ENCODE measurements at regions of chr19 and their contacts with region 1.

Region 1: DNA sequence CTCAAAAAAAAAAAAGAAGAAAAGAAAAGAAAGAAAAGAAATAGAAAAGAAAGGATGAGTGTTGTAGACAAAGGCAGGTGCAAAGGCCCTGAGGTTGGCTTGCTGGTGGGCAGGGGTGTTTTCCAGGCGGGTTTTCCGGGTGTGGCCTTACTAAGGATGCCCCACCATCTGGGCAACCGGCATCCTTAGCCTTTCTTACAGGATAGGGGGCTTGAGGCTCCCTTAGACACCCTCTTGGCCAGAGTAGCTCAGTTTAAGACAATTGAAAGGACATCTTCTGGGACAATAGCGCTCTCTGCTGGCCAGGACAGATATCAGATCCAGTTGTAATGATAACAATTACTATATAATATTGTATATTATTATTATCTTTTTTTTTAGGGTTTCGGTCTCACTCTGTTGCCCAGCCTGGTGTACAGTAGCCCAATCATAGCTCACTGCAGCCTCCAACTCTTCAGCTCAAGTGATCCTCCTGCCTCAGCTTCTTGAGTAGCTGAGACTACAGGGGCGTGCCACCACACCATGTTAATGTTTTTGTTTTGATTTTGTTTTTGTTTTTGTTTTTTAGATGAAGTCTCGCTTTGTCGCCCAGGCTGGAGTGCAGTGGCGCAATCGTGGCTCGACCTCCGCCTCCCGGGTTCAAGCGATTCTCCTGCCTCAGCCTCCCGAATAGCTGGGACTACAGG is 1.4 kb upstream of the QTRT1 start:
- DNase-seq: peak; percentile 85
- H3K4me3 ChIP-seq: no peak overlapping the region
- H3K27ac ChIP-seq: no peak overlapping the region
- H3K4me1 ChIP-seq: peaks cover 14% of the 10 kb centered on the region
- CTCF ChIP-seq: peak; percentile 84

Region 2: GRCh38 chr19:10510301-10510802 is 189.4 kb before region 1 on chr19:
- CTCF ChIA-PET with region 1: interaction called, 3 read pairs
- POLR2A ChIA-PET with region 1: no interaction called
- intact Hi-C with region 1: loop called (anchors 2 kb)
- DNase-seq: peak; percentile 44
- H3K4me3 ChIP-seq: no peak overlapping the region
- H3K27ac ChIP-seq: no peak overlapping the region
- H3K4me1 ChIP-seq: peaks cover 3% of the 10 kb centered on the region
- CTCF ChIP-seq: peak; percentile 78

Region 3: DNA sequence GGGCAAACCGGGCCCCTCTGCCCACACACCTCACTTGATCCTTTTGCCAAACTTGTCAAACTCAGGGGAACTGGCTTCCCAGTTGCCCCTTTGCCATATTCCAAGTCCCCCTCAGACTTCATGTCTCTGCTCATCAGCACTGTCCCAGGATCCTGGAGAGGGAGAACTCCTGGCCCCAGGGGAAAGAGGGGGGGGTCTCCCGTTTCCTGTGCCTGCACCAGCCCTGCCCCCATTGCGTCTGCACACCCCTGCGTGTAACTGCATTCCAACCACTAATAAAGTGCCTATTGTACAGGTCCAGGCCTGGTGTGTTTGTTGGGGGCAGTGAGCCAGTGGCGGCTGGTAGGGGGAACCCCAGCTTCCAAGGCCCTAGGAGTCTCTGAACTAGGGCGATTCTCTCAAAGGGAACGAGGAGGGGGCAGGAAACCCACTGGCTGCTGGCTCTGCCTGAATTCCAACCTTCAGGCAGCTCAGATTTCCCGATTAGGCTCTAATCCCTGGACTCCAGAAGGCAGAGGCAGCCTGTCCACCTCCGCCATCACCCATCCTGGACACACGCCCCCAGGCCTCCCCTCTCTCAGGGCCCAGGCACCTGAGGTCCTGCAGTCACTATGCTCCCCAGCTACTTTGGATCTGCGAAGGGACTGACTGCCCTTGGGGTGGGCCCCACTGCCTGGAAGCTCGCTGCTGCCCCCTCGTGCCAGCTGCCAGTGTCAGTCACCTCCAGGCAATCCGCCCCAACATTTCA is 55.4 kb before region 1 on chr19:
- CTCF ChIA-PET with region 1: no interaction called
- POLR2A ChIA-PET with region 1: no interaction called
- intact Hi-C with region 1: loop called (anchors 2 kb)
- DNase-seq: peak; percentile 85
- H3K4me3 ChIP-seq: no peak overlapping the region
- H3K27ac ChIP-seq: peak overlapping the region; percentile 18
- H3K4me1 ChIP-seq: peaks cover 13% of the 10 kb centered on the region
- CTCF ChIP-seq: peak; percentile 89

Region 4: GRCh38 chr19:10653715-10654492 is 45.9 kb before region 1 on chr19 and contains the start of gene ILF3:
- CTCF ChIA-PET with region 1: no interaction called
- POLR2A ChIA-PET with region 1: no interaction called
- intact Hi-C with region 1: loop called (anchors 2 kb)
- DNase-seq: peak; percentile 100
- H3K4me3 ChIP-seq: peak within 1 kb of the TSS; percentile 100
- H3K27ac ChIP-seq: peak within 1 kb of the TSS; percentile 88
- H3K4me1 ChIP-seq: peaks cover 41% of the 10 kb centered on the region
- CTCF ChIP-seq: no peak
- total RNA-seq, gene ILF3: 308 and 347 TPM in 2 replicates

Region 5: DNA sequence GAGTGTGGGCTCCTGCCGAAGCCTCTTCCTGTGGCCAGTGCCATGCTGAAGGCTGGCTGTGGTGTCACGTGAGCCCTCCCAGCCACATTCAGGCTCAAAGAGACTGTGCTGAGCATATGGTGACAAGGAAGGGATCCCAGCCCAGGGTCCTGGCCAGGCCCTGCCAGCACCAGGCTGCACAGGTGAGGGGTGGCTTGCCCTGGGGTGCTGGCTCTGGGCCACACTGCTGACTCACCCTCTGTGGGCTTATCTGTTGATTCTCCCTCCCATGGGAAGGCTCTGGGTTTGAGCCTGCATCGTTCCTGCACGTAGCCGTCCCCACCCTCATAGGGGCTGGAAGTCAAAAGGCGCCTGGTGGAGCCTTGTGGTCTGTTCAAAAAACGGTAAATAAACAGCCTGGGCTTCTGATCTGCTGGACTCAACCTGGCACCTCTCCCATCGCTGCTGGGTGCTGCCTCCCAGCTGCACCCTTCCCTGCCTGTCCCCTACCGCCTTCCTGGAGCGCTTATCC is 49.2 kb after region 1 on chr19:
- CTCF ChIA-PET with region 1: no interaction called
- POLR2A ChIA-PET with region 1: no interaction called
- intact Hi-C with region 1: no loop called
- DNase-seq: no peak
- H3K4me3 ChIP-seq: no peak overlapping the region
- H3K27ac ChIP-seq: no peak overlapping the region
- H3K4me1 ChIP-seq: peaks cover 8% of the 10 kb centered on the region
- CTCF ChIP-seq: no peak

Region 6: DNA sequence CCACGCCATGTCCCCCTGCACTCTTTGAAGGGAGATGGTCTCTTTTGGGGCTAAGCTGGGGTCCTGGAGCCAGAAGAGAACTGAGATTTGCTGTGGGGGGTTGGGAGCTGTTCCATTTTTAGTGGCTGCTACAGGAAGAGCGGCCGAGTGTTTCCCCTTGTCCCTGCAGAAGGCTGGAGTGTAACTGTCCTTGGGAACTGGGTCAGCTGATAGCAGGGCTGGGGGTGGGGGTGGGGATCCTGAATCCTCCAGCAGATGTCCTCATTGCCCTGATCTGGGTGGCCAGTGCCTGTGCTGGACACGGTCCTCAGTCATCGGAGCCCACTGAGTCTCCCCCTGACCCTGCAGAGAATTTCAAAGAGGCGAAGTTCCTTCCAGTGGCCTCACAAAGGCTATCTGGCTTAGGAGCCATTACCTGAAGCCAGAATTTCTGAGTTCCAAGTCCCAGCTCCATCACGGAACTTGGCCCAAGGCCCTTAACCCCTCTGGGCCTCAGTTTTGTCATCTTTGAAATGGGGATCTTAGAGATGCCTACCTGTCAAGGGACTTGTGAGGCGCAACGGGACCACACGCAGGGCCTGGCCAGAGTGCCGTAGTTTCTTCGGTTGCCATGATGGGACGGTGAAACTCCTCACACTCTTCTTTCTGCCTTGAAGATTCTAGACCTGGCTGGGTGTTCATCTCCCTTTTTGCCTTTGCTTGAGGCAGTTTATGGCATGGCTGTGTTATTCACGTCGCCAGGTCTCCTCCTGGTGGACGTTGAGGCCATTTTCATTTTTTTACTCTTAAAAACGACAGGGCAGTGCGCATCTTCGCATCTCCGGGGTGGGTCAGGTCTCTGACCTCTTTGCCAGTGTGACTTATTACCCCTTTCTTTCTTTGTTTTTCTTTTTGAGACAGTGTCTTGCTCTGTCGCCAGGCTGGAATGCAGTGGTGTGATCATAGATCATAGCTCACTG is 70.0 kb after region 1 on chr19:
- CTCF ChIA-PET with region 1: no interaction called
- POLR2A ChIA-PET with region 1: no interaction called
- intact Hi-C with region 1: no loop called
- DNase-seq: peak; percentile 21
- H3K4me3 ChIP-seq: no peak overlapping the region
- H3K27ac ChIP-seq: no peak overlapping the region
- H3K4me1 ChIP-seq: peaks cover 22% of the 10 kb centered on the region
- CTCF ChIP-seq: 0 out of 2 replicates have a peak, but pooled peaks have one; percentile 29

Region 7: DNA sequence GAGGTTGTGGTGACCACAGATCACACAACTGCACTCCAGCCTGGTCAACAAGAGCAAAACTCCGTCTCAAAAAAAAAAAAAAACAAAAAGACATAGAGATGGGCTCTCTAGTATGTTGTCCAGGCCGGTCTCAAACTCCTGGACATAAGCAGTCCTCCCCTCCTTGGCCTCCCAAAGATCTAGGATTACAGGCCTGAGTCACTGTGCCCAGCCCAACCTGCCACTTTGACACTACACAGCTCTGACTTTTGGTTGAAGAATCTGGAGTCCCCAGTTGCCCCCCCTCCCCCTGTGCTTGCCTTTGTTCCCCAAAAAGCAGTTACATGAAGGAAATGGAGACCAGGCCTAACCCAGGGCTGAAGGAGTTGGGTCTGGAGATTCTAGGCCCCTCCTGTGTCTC is 184.5 kb after region 1 on chr19:
- CTCF ChIA-PET with region 1: no interaction called
- POLR2A ChIA-PET with region 1: no interaction called
- intact Hi-C with region 1: no loop called
- DNase-seq: no peak
- H3K4me3 ChIP-seq: no peak overlapping the region
- H3K27ac ChIP-seq: no peak overlapping the region
- H3K4me1 ChIP-seq: peaks cover 52% of the 10 kb centered on the region
- CTCF ChIP-seq: no peak

Region 8: DNA sequence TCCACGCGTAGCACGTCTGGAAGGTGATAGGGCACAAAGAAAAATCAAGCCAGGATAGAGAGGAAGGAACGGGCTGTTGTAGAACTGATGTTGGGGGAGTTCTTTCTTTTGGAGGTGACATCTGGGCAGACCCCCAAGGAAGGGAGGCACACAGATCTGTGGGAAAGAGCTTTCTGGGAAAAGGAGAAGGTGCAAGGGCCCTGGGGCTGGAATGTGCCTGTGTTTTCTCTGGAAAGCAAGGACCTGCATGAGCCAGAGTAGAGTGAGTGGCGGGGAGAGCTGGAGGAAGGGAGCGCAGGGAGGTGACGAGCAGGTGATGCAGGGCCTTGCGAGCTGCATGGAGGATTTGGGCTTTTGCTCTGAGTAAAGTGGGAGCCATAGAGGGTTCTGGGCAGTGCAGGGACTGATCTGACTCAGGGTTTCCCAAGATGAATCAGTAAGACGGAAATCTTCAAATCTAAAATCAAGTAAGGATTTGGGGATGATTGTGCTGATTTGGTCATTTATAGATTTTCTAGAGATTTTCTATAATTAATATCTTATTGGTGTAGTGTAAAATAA is 291.8 kb after region 1 on chr19:
- CTCF ChIA-PET with region 1: no interaction called
- POLR2A ChIA-PET with region 1: no interaction called
- intact Hi-C with region 1: no loop called
- DNase-seq: no peak
- H3K4me3 ChIP-seq: no peak overlapping the region
- H3K27ac ChIP-seq: no peak overlapping the region
- H3K4me1 ChIP-seq: no peaks in the 10 kb centered on the region
- CTCF ChIP-seq: no peak